AG04450 (cell line): ENCODE measurements at regions of chr4 and their contacts with region 1.

Region 1: GRCh38 chr4:140326395-140326993 is 47.0 kb upstream of the SCOC start:
- DNase-seq: no peak
- H3K4me3 ChIP-seq: no peak overlapping the region
- H3K27ac ChIP-seq: no peak overlapping the region
- H3K27me3 ChIP-seq: no peaks in the 10 kb centered on the region
- CTCF ChIP-seq: peak; percentile 84

Region 2: DNA sequence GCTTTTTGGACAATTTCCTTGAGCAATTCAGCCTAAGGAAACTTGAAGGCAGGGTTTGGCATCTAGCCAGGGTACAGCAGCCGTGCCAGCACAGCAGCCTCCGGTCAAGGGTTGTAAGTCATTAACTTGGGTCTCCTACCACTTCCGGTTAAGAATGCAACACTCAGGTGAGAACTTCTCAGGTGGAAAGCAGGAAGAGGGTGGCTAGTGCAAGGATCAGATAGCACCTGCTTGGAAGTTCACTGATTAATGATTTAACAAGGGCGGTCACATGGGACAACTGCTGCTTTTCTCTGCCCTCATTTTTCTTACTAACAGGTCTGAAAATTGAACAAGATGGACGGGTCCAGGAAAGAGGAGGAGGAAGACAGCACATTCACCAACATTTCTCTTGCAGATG is 16.8 kb after region 1 on chr4:
- CTCF ChIA-PET with region 1: interaction called, 12 read pairs
- POLR2A ChIA-PET with region 1: no interaction called
- DNase-seq: no peak
- H3K4me3 ChIP-seq: no peak overlapping the region
- H3K27ac ChIP-seq: no peak overlapping the region
- H3K27me3 ChIP-seq: peaks cover 9% of the 10 kb centered on the region
- CTCF ChIP-seq: no peak

Region 3: DNA sequence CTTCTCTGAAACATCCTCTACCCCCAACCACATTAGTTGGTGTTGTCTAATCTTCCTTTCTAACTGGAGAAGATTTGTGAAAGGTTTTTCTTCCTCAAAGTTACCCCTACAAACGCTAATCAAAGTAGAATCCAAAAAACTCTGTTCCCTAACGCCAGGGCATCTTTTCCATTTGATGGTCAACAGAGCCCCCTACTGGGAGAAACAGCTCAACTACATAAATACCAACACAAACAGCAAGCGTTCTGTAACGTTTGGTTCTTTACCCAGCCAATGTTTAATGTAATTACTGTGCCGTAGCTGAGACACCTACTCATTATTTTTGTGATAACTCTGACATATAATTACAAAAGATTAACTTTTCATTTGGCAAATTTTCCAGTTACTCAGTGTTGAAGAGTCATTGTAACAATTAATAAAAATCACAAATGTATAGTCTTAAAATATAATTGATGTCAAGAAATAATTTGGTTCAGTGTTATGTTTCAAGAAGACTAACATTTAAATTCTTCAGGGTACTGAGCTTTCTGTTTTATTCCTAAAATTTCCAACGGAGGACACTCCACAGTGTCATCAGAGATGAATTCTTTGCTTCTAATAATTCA is 524.6 kb after region 1 on chr4:
- CTCF ChIA-PET with region 1: interaction called, 17 read pairs
- POLR2A ChIA-PET with region 1: no interaction called
- DNase-seq: peak; percentile 43
- H3K4me3 ChIP-seq: no peak overlapping the region
- H3K27ac ChIP-seq: no peak overlapping the region
- H3K27me3 ChIP-seq: no peaks in the 10 kb centered on the region
- CTCF ChIP-seq: peak; percentile 81